Aorta (tissue), 5 donors: ENCODE measurements at regions of chr11 and their contacts with region 1.

Region 1: GRCh38 chr11:12693479-12694181 is 19.4 kb downstream of the TEAD1 start:
- DNase-seq: peak in 1 of 2 donors; percentile 71
- ATAC-seq: peak; percentile 90
- H3K4me3 ChIP-seq: no peak overlapping the region
- H3K27ac ChIP-seq: peak overlapping the region; percentile 90 to 99
- H3K4me1 ChIP-seq: peaks cover 3 to 16% of the 10 kb centered on the region in 2 donors
- H3K27me3 ChIP-seq: no peaks in the 10 kb centered on the region

Region 2: DNA sequence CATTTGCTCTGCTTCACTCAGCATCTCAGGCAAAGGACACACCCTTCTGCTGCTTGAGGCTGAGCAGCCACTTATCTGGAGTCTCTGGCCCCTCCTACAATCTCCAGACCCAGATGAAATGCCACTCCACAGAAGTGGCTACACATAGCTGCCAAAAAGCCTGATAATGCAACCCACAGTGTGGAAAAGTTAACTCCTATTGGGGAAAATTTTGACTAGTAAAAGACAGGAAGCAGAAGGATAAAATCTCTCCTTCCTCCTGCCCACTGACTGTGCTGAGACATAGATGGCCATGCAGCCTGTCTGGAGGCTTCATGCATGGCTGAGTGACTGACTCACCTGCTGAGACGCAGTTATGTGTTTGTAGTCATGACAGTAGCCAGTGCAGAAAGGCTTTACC is 111.7 kb before region 1 on chr11:
- intact Hi-C with region 1: no loop called
- DNase-seq: no peak
- ATAC-seq: no peak
- H3K4me3 ChIP-seq: no peak overlapping the region
- H3K27ac ChIP-seq: no peak overlapping the region
- H3K4me1 ChIP-seq: no peaks in the 10 kb centered on the region
- H3K27me3 ChIP-seq: no peaks in the 10 kb centered on the region

Region 3: DNA sequence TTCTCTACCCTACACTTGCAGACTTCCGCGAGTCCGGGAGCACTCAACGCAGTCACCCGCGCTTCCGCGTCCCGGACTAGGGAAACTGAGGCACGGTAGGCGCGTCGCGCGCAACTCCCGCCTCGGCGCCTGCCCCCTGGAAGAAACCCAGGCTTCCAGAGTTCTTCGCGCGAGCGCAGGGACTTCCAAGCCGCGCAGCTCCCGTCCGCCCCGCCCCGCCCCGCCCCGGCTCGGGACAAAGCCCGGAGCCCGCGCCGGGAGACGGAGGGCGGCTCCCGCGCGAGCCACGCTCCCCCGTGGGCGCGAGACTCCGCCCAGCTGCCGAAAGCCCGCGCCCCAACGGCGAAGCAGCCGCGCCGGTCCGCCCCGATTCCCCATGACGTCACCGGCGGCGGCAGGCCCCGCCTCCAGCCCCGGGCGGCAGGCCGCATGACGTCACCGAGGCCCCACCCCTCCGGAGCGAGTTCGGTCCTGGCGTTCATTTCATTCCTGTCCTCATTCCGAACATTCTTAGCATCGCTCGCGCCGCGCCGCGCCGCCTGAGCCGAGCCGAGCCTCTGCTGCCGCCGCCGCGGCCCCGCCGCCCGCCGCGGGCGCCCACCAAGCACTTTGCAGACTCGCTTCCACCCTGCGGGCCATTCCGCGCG is 19.6 kb before region 1 on chr11 and contains the start of gene TEAD1:
- intact Hi-C with region 1: loop called in 1 of 2 experiments (anchors 2 kb)
- DNase-seq: peak; percentile 96 to 99
- ATAC-seq: peak; percentile 96
- H3K4me3 ChIP-seq: peak within 1 kb of the TSS; percentile 92 to 99
- H3K27ac ChIP-seq: peak within 1 kb of the TSS; percentile 71 to 88
- H3K4me1 ChIP-seq: peaks cover 0 to 2% of the 10 kb centered on the region in 2 donors
- H3K27me3 ChIP-seq: no peaks in the 10 kb centered on the region
- total RNA-seq, gene TEAD1: 56.5 to 64.9 TPM

Region 4: GRCh38 chr11:12769834-12770345 is 76.3 kb after region 1 on chr11:
- intact Hi-C with region 1: loop called in 1 of 2 experiments (anchors 10 kb)
- DNase-seq: no peak
- ATAC-seq: no peak
- H3K4me3 ChIP-seq: no peak overlapping the region
- H3K27ac ChIP-seq: no peak overlapping the region
- H3K4me1 ChIP-seq: peaks cover 0 to 2% of the 10 kb centered on the region in 2 donors
- H3K27me3 ChIP-seq: no peaks in the 10 kb centered on the region